SK-N-SH (cell line): ENCODE measurements at regions of chr1 and their contacts with region 1.

Region 1: DNA sequence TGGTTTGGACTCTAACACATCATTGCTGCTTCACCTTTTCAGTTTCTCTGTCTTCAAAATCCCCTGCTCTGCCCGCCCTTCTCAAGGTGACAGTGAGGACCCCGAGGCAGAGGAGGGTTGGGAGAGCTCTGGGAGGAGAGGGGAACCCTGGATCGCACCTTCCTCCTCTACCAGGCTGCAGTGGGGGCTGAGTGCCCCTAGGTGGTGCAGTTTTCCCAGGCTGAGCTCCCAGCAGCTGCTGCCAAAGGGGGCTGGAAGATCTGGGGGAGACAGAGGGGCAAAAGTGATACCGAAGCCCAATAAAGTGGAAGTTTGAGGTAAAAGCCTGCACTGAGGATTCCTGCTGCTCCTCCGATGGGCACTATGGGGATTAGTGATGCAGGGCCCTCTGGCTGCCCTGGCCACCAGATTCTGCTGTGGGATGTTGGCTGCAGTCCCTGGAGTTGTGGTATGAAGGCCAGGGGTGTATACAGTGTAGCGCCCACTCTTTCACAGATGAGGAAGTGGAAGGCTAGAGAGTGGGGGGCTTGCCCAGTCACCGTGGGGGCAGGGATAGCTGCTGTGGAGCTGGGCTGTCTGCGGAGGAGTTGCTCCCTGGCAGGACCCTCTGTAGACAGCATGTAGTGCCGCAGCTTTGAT is 40.7 kb upstream of the SCMH1 start:
- DNase-seq: peak; percentile 78
- H3K4me3 ChIP-seq: no peak overlapping the region; a peak in 1 of 4 replicates
- H3K27ac ChIP-seq: no peak overlapping the region
- H3K4me1 ChIP-seq: peaks cover 0 to 2% of the 10 kb centered on the region in 2 experiments; a peak in 1 of 4 replicates
- H3K27me3 ChIP-seq: no peaks in the 10 kb centered on the region; the same call in 1 of the 2 replicates
- CTCF ChIP-seq: peak; percentile 94
- EP300 ChIP-seq: no peak
- RAD21 ChIP-seq: peak; percentile 83

Region 2: DNA sequence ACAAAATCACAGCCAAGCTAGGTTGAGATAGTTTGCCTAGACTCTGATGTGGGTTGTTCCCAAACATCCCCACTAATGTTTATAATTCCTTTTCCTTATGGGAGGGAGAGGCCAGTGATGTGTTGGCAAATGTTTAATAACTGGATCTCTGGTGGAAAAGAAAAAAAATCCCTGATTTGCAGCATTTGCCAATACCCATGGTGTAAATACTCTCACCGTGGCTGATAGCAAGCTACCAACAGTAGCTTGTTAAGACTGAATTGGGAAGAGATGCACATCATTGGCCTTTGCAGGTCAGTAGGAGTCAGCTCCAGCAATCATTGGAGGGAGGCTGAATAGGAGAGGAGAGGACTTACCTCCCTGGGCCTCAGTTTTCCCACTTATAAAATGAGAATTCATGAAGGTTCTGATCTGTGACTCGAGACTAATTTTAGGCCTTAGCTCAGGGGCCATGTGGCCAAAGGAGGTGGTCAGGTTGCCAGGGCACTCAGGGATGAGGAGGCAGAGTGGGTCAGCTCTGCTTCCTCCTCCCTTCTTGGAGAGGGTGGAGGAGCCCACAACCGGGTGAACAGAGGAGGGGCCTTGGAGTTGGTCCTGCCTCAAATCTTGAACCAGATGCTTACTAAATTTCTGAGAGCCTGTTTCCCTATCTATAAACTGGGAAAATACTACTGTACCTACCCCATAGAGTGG is 20.7 kb before region 1 on chr1:
- CTCF ChIA-PET with region 1: interaction called, 13 read pairs
- POLR2A ChIA-PET with region 1: no interaction called
- DNase-seq: no peak
- H3K4me3 ChIP-seq: no peak overlapping the region
- H3K27ac ChIP-seq: no peak overlapping the region
- H3K4me1 ChIP-seq: peaks cover 0 to 2% of the 10 kb centered on the region in 2 experiments; a peak in 1 of 4 replicates
- H3K27me3 ChIP-seq: no peaks in the 10 kb centered on the region
- CTCF ChIP-seq: no peak
- EP300 ChIP-seq: no peak
- RAD21 ChIP-seq: no peak

Region 3: GRCh38 chr1:41294216-41294615 is 11.4 kb after region 1 on chr1:
- CTCF ChIA-PET with region 1: interaction called, 33 read pairs
- POLR2A ChIA-PET with region 1: no interaction called
- DNase-seq: no peak
- H3K4me3 ChIP-seq: no peak overlapping the region
- H3K27ac ChIP-seq: no peak overlapping the region
- H3K4me1 ChIP-seq: peaks cover 0 to 6% of the 10 kb centered on the region in 2 experiments; a peak in 1 of 4 replicates
- H3K27me3 ChIP-seq: peaks cover 15% of the 10 kb centered on the region; the same call in 1 of the 2 replicates
- CTCF ChIP-seq: no peak
- EP300 ChIP-seq: no peak
- RAD21 ChIP-seq: no peak

Region 4: DNA sequence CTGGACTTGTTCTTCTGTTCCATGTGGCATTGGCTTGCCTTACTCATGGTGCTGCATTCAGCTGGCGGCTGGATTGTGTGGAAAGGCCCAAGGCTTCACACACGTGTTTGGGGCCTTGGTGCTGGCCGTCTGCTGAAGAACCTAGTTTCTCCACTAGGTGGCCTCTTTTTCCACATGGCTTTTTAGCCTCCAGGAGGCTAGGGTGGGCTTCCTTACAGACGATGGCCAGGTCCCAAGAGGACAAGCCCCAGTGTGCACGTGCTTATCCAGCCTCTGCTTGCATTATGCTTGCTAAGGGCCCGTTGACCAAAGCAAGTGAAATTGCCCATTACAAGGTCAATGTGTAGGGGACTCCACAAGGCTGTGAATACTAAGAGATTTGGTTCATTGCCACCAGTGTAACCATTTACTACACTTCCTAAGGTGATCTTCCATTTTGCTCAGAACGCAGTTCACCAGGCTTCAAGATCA is 30.9 kb after region 1 on chr1:
- CTCF ChIA-PET with region 1: interaction called, 21 read pairs
- POLR2A ChIA-PET with region 1: no interaction called
- DNase-seq: peak; percentile 47
- H3K4me3 ChIP-seq: no peak overlapping the region
- H3K27ac ChIP-seq: no peak overlapping the region
- H3K4me1 ChIP-seq: no peaks in the 10 kb centered on the region
- H3K27me3 ChIP-seq: no peaks in the 10 kb centered on the region
- CTCF ChIP-seq: peak; percentile 58
- EP300 ChIP-seq: no peak
- RAD21 ChIP-seq: peak; percentile 35; the same call in 1 of the 2 replicates

Region 5: DNA sequence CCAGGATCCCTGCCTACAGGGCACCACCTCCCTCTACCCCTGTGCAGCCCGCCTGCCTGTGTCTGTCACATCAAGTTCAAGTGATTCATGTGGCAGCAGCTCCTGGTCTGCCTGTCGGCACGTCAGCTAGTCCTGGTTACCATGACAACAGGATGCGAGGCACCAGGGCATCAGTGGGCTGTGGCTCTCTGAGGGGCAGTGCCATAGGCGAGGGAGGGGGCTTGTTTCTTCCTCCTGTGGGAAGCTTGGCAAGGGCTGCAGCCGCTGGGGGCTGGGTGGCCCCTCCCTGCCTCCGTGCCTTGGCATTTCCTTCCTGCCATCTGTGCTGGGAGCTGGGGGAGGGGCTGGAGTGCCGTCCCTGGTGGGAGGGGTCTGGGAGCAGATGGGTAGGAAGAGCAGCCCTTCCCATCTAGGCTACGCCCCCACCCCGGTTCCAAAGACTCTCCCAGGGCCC is 121.5 kb after region 1 on chr1:
- CTCF ChIA-PET with region 1: interaction called, 23 read pairs
- POLR2A ChIA-PET with region 1: interaction called, 3 read pairs
- DNase-seq: peak; percentile 90
- H3K4me3 ChIP-seq: peak overlapping the region; percentile 4 to 16; a peak in 1 of 4 replicates
- H3K27ac ChIP-seq: peak overlapping the region in 1 of 2 experiments; percentile 50; a peak in 1 of 4 replicates
- H3K4me1 ChIP-seq: peaks cover 7 to 21% of the 10 kb centered on the region in 2 experiments; a peak in 3 of 4 replicates
- H3K27me3 ChIP-seq: no peaks in the 10 kb centered on the region
- CTCF ChIP-seq: no peak
- EP300 ChIP-seq: peak in 1 of 2 experiments; percentile 33; a peak in 1 of 4 replicates
- RAD21 ChIP-seq: no peak

Region 6: DNA sequence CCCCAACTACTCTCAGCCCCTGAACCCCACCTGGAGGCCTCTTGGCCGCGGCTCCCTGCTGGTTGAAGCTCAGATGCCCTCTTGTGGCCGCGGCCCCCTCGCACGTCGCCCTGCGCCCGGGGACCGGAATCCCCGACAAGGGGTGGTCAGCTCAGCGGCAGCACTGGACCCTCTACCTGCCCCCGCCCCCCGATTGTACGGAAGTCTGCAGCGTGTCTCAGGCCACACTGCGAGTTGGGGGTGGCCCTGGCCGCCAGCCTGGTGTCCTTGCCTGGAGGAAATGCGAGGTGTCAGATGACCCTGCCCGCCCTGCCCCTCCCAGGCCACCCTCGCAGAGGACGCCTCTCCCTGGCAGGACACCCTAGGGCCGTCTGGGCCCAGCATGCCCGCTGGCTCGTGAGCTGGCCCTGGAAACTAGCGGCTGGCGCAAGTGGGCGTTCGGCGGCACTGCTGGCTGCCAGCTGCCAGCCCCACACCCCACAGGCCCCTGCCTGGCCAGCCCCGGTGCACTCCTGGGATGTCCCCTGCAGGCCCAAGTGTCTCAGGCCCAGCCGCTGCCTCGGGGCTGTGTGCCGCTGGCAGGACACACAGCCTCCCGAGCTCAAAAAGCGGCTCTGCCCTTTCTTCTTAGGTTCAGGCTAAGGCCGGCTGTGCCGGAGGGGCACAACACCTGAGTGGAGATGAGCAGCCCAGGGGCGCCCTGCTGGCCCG is 140.9 kb after region 1 on chr1:
- CTCF ChIA-PET with region 1: interaction called, 174 read pairs
- POLR2A ChIA-PET with region 1: no interaction called
- DNase-seq: peak; percentile 72
- H3K4me3 ChIP-seq: no peak overlapping the region
- H3K27ac ChIP-seq: no peak overlapping the region
- H3K4me1 ChIP-seq: peaks cover 8 to 17% of the 10 kb centered on the region in 2 experiments; a peak in 3 of 4 replicates
- H3K27me3 ChIP-seq: no peaks in the 10 kb centered on the region
- CTCF ChIP-seq: peak; percentile 40
- EP300 ChIP-seq: no peak
- RAD21 ChIP-seq: peak; percentile 45